ENCODE measurements at regions of chr14 and their contacts with region 1.

Region 1: GRCh38 chr14:59897761-59898383 is 22.1 kb upstream of the LRRC9 start:
- DNase-seq: peak in 7 of 10 donors; percentile 7 to 80 (median 43)

Region 2: GRCh38 chr14:59632381-59632780 is 265.5 kb before region 1 on chr14:
- intact Hi-C with region 1: loop called (anchors 5 kb)
- DNase-seq: peak in 2 of 10 donors; percentile 20 to 58

Region 3: GRCh38 chr14:59707778-59708561 is 189.9 kb before region 1 on chr14:
- intact Hi-C with region 1: loop called (anchors 5 kb)
- DNase-seq: no peak